GM10248 (cell line): ENCODE measurements at regions of chr1 and their contacts with region 1.

Region 1: DNA sequence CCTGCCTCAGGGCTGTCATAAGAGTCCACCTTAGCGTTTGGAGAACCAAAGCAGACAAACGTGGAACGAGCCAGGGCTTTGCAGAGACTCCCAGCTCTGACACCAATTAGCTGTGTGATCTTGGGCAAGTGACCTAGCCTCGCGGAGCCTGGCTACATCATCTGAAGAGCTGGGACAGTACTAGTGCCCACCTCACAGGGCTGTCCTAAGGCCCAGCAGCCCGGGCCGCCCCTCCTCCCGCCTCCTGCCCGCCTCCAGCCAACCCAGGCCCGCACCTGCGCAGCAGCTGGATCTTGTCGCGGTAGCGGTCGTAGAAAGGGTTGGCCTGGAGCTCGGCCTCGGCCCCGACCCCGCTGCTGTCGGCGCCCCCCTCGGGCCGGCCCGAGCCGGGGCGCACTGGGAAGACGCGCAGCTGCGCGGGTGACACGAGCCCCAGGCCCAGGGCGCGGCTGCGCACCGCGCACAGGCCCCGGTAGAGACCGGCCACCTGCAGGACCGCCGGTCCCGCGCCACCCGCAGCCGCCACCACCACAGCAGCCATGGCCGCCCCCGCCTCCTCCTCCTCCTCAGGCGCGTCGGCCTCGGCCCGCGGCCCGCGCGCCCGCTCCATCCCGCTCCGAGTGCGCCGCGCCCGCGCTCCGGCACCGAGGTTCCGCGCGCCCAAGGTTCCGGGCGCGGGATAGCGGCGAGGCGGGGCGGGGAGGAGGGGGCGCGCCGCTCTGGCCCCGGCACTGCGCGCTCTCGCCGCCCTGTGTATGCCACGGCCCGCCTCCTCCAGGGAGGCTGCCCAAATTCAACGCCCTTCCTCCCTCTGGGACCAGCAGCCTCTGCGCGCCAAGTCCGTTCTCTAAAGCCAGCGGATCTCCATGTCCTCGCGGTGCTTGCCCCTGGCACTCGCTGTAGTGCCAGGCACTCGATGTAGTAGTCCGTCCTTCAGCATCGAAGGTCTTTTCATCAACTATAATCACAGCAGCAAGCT is at the start of gene ATPAF1:
- DNase-seq: peak; percentile 85
- CTCF ChIP-seq: no peak

Region 2: DNA sequence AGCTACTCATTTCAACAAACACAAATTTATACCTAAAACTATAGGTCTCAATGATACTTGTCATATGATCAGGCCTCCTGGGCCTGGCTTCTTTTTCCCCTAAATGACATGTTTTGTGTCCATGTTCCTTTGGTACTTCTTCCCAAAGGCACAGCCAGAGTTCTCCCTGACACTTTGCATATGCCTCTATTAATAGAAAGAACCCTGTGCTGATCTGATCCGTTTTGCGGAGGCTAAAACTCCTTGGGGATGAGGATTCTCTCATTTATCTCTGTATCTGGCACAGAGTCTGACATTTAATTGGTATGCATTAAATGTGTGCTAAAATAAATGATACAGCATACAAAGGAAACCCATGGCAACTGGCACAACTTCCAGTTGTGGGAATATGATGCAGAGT is 11.4 kb before region 1 on chr1:
- CTCF ChIA-PET with region 1: interaction called, 11 read pairs
- POLR2A ChIA-PET with region 1: no interaction called
- DNase-seq: no peak
- CTCF ChIP-seq: no peak